Heart left ventricle (tissue), 16 donors: ENCODE measurements at regions of chr17 and their contacts with region 1.

Region 1: GRCh38 chr17:2904152-2904551 is 107.9 kb downstream of the RAP1GAP2 start:
- DNase-seq: peak; percentile 70 to 89 (median 77)
- ATAC-seq: peak; percentile 72 to 87 (median 78)
- H3K4me3 ChIP-seq: no peak overlapping the region
- H3K27ac ChIP-seq: peak overlapping the region in 5 of 12 donors; percentile 25 to 88 (median 66)
- H3K4me1 ChIP-seq: peaks cover 0 to 63% (median 14%) of the 10 kb centered on the region in 12 donors
- H3K27me3 ChIP-seq: no peaks in the 10 kb centered on the region
- CTCF ChIP-seq: no peak
- POLR2A ChIP-seq: no peak

Region 2: GRCh38 chr17:2862197-2862596 is 42.0 kb before region 1 on chr17:
- intact Hi-C with region 1: loop called in 3 of 10 experiments (anchors 2 to 5 kb)
- DNase-seq: no peak
- ATAC-seq: no peak
- H3K4me3 ChIP-seq: no peak overlapping the region
- H3K27ac ChIP-seq: peak overlapping the region in 2 of 12 donors; percentile 62 to 75
- H3K4me1 ChIP-seq: peaks cover 0 to 39% (median 3%) of the 10 kb centered on the region in 12 donors
- H3K27me3 ChIP-seq: no peaks in the 10 kb centered on the region
- CTCF ChIP-seq: no peak
- POLR2A ChIP-seq: no peak